Endothelial cell of umbilical vein (primary cell): ENCODE measurements at regions of chr1 and their contacts with region 1.

Region 1: GRCh38 chr1:211578640-211579433 is at the start of gene SLC30A1:
- DNase-seq: peak; percentile 98
- H3K4me3 ChIP-seq: peak within 1 kb of the TSS; percentile 74 to 99 (median 98)
- H3K27ac ChIP-seq: peak within 1 kb of the TSS; percentile 64
- H3K4me1 ChIP-seq: peaks cover 33% of the 10 kb centered on the region
- H3K27me3 ChIP-seq: no peaks in the 10 kb centered on the region
- CTCF ChIP-seq: no peak
- POLR2A ChIP-seq: peak; percentile 94
- total RNA-seq, gene SLC30A1: 21.5 and 22.1 TPM in 2 replicates

Region 2: GRCh38 chr1:210233216-210234020 is 1345.4 kb before region 1 on chr1:
- CTCF ChIA-PET with region 1: no interaction called
- POLR2A ChIA-PET with region 1: no interaction called
- dilution Hi-C with region 1: no loop called
- intact Hi-C with region 1: loop called (anchors 10 kb)
- DNase-seq: peak; percentile 86
- H3K4me3 ChIP-seq: peak overlapping the region; percentile 66 to 80 (median 74)
- H3K27ac ChIP-seq: peak overlapping the region; percentile 83
- H3K4me1 ChIP-seq: peaks cover 35% of the 10 kb centered on the region
- H3K27me3 ChIP-seq: peaks cover 0 to 5% of the 10 kb centered on the region in 2 experiments
- CTCF ChIP-seq: no peak
- POLR2A ChIP-seq: peak; percentile 32

Region 3: GRCh38 chr1:211382714-211383480 is 195.9 kb before region 1 on chr1:
- CTCF ChIA-PET with region 1: no interaction called
- POLR2A ChIA-PET with region 1: no interaction called
- dilution Hi-C with region 1: no loop called
- intact Hi-C with region 1: loop called (anchors 2 kb)
- DNase-seq: peak; percentile 94
- H3K4me3 ChIP-seq: peak overlapping the region; percentile 50 to 77 (median 56)
- H3K27ac ChIP-seq: peak overlapping the region; percentile 96
- H3K4me1 ChIP-seq: peaks cover 11% of the 10 kb centered on the region
- H3K27me3 ChIP-seq: no peaks in the 10 kb centered on the region
- CTCF ChIP-seq: no peak
- POLR2A ChIP-seq: peak; percentile 98

Region 4: GRCh38 chr1:211551628-211552460 is 27.0 kb before region 1 on chr1:
- CTCF ChIA-PET with region 1: interaction called, 3 read pairs
- POLR2A ChIA-PET with region 1: interaction called, 4 read pairs
- dilution Hi-C with region 1: no loop called
- intact Hi-C with region 1: loop called (anchors 1 kb)
- DNase-seq: peak; percentile 78
- H3K4me3 ChIP-seq: no peak overlapping the region
- H3K27ac ChIP-seq: peak overlapping the region; percentile 84
- H3K4me1 ChIP-seq: peaks cover 18% of the 10 kb centered on the region
- H3K27me3 ChIP-seq: no peaks in the 10 kb centered on the region
- CTCF ChIP-seq: no peak
- POLR2A ChIP-seq: peak; percentile 49

Region 5: GRCh38 chr1:211648980-211649934 is 70.4 kb after region 1 on chr1:
- CTCF ChIA-PET with region 1: interaction called, 31 read pairs
- POLR2A ChIA-PET with region 1: interaction called, 4 read pairs
- dilution Hi-C with region 1: no loop called
- intact Hi-C with region 1: no loop called
- DNase-seq: no peak
- H3K4me3 ChIP-seq: no peak overlapping the region
- H3K27ac ChIP-seq: no peak overlapping the region
- H3K4me1 ChIP-seq: peaks cover 35% of the 10 kb centered on the region
- H3K27me3 ChIP-seq: no peaks in the 10 kb centered on the region
- CTCF ChIP-seq: peak in 1 of 2 donors; percentile 11
- POLR2A ChIP-seq: no peak

Region 6: GRCh38 chr1:211761400-211761799 is 182.6 kb after region 1 on chr1:
- CTCF ChIA-PET with region 1: no interaction called
- POLR2A ChIA-PET with region 1: no interaction called
- dilution Hi-C with region 1: no loop called
- intact Hi-C with region 1: no loop called
- DNase-seq: no peak
- H3K4me3 ChIP-seq: no peak overlapping the region
- H3K27ac ChIP-seq: no peak overlapping the region
- H3K4me1 ChIP-seq: no peaks in the 10 kb centered on the region
- H3K27me3 ChIP-seq: no peaks in the 10 kb centered on the region
- CTCF ChIP-seq: no peak
- POLR2A ChIP-seq: no peak

Region 7: DNA sequence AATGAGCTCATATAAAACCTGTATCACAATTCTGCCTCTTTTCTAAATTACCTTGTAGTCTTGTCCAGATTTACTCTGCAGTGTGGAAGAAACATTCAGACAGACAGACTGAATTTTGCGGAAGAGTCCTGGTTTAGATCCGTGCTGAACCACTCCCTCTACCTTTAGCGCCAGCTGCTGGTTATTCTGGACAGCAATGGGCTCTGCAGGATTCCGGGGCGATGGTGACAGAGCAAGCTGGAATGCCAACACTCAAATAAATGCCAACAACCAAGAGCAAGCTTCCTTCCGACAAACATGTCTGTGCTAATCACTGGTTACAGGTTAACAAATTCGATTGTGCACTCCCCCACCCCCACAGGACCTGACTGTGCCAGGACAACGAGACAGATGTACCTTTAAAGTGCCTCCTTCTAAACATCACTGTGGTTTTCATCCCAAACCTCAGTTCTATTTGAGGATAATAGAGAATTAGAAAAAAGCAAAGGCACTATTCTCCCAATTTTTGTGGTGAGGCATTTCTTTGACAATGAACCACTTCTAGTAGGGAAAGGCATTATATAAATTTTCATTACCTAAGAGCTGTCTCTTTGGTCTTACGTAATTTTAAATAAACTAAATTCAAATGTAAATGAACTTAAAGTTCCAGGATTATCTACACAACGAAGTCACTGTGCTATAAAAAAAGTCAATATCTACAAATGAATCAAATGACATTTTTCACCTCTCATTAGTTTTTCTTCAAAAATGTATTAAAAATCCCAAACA is 366.1 kb after region 1 on chr1:
- CTCF ChIA-PET with region 1: no interaction called
- POLR2A ChIA-PET with region 1: no interaction called
- dilution Hi-C with region 1: no loop called
- intact Hi-C with region 1: no loop called
- DNase-seq: no peak
- H3K4me3 ChIP-seq: no peak overlapping the region
- H3K27ac ChIP-seq: no peak overlapping the region
- H3K4me1 ChIP-seq: peaks cover 6% of the 10 kb centered on the region
- H3K27me3 ChIP-seq: no peaks in the 10 kb centered on the region
- CTCF ChIP-seq: no peak
- POLR2A ChIP-seq: no peak

Region 8: GRCh38 chr1:212566522-212567479 is 988.0 kb after region 1 on chr1:
- CTCF ChIA-PET with region 1: no interaction called
- POLR2A ChIA-PET with region 1: no interaction called
- dilution Hi-C with region 1: no loop called
- intact Hi-C with region 1: loop called (anchors 10 kb)
- DNase-seq: peak; percentile 87
- H3K4me3 ChIP-seq: peak overlapping the region in 2 of 3 experiments; percentile 45 to 76
- H3K27ac ChIP-seq: peak overlapping the region; percentile 70
- H3K4me1 ChIP-seq: peaks cover 18% of the 10 kb centered on the region
- H3K27me3 ChIP-seq: no peaks in the 10 kb centered on the region
- CTCF ChIP-seq: no peak
- POLR2A ChIP-seq: peak; percentile 47